H1 (cell line): ENCODE measurements at regions of chr17 and their contacts with region 1.

Region 1: GRCh38 chr17:57902800-57903759 is 52.1 kb downstream of the CUEDC1 start:
- DNase-seq: no peak
- H3K4me3 ChIP-seq: no peak overlapping the region
- H3K27ac ChIP-seq: no peak overlapping the region
- H3K4me1 ChIP-seq: peaks cover 5 to 36% (median 26%) of the 10 kb centered on the region in 4 experiments
- H3K27me3 ChIP-seq: no peaks in the 10 kb centered on the region
- CTCF ChIP-seq: no peak
- EP300 ChIP-seq: no peak
- POLR2A ChIP-seq: no peak
- RAD21 ChIP-seq: no peak

Region 2: DNA sequence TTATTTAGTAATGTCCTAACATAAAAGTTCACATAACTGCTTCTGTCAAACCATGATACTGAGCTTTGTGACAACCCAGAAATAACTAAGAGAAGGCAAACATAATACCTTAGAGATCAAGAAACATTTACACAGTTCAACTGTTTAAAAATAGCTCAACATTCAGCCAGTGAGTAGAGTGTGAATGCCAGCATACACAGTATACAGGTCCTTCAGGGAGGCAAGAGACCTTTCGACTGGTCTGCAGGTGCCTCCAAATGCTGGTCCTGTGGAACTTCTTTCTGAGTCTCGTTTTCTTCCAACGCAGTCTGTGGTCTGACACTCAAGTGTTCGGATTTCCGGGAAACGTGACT is 63.5 kb before region 1 on chr17:
- CTCF ChIA-PET with region 1: no interaction called
- POLR2A ChIA-PET with region 1: no interaction called
- DNase-seq: no peak
- H3K4me3 ChIP-seq: no peak overlapping the region
- H3K27ac ChIP-seq: no peak overlapping the region
- H3K4me1 ChIP-seq: no peaks in the 10 kb centered on the region
- H3K27me3 ChIP-seq: no peaks in the 10 kb centered on the region
- CTCF ChIP-seq: no peak
- EP300 ChIP-seq: no peak
- POLR2A ChIP-seq: no peak
- RAD21 ChIP-seq: no peak

Region 3: DNA sequence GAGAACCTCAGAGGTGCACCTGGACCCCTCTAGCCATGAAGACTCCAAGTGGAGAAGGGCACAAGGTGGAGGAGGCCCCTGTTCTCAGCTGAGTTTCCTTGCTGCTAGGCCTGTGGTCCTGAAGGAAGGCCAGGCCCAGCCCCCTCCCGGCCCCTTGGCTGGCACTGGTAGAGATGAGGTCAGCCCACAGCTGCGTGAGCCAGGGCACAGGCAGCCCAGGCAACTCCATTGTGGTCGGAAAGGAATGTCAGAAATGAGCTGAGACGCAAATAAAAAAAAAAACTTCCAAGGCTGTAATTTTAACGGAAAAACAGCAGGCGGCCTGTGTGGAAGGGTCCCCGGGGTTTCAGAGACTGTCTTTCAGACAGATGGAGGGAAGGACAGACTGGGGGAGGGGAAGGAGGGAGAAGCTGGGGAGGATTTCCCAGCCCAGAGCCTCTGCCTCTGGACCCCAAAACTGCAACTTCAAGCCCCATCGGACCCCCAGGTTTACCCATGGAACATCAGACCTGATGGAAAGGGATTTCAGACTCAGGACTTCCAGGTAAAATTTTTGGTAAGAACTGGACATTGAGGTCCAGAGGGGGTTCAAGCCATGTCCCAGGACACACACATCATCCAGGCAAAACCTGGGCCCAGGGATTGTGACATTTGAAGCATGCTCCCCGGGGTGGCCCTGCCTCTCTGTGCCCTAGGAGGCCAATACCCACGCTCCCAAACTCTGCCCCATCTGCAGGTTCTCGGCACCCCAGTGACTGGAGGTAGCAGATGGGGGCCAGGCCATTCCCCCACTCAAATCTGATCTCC is 27.6 kb before region 1 on chr17:
- CTCF ChIA-PET with region 1: interaction called, 13 read pairs
- POLR2A ChIA-PET with region 1: interaction called, 8 read pairs
- DNase-seq: peak; percentile 71 to 72
- H3K4me3 ChIP-seq: peak overlapping the region in 2 of 4 experiments; percentile 11 to 32; a peak in 5 of 8 replicates
- H3K27ac ChIP-seq: peak overlapping the region; percentile 32; the same call in 1 of the 2 replicates
- H3K4me1 ChIP-seq: peaks cover 21 to 50% (median 37%) of the 10 kb centered on the region in 4 experiments
- H3K27me3 ChIP-seq: peaks cover 0 to 14% (median 6%) of the 10 kb centered on the region in 4 experiments; a peak in 4 of 7 replicates
- CTCF ChIP-seq: 0 out of 4 replicates have a peak, but pooled peaks of 1 of the 3 experiments have one; percentile 6
- EP300 ChIP-seq: no peak
- POLR2A ChIP-seq: no peak
- RAD21 ChIP-seq: peak in 1 of 2 experiments; percentile 20; a peak in 2 of 4 replicates

Region 4: DNA sequence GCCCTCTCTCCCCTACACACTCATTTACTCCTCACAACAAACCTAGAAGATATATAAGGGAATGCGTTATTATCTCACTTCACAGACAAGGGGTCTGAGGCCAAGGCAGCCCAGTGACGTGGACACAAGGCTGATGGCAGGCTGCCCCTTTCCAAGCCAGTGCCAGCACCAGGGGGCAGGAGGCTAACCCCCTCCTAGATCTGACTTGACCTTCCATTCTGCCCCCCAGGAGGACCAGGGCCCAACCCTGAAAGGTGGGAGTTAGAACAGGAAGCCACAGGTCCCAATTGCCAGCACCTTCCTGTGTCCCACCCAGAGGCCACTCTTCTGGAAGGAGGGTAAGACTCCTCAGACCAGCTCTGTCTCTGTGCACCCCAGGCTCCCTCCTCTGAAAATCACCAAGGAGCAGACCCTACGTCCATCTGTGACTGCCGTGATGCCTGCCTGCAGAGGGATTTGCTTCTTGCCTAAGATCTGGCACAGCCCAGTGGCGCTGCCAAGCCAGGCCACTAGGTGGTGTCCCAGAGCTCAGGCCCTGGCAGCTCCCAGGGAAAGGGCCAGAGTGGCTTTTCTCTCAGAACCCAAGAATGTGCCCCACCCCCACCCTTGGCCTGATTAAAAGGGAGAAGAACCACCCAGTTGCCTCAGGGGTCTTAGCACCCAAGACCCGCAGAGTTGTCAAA is 10.8 kb before region 1 on chr17:
- CTCF ChIA-PET with region 1: interaction called, 31 read pairs
- POLR2A ChIA-PET with region 1: interaction called, 9 read pairs
- DNase-seq: peak in 1 of 2 experiments; percentile 99
- H3K4me3 ChIP-seq: peak overlapping the region in 1 of 4 experiments; percentile 1; a peak in 1 of 8 replicates
- H3K27ac ChIP-seq: peak overlapping the region; percentile 54; the same call in 1 of the 2 replicates
- H3K4me1 ChIP-seq: peaks cover 8 to 11% (median 11%) of the 10 kb centered on the region in 4 experiments
- H3K27me3 ChIP-seq: no peaks in the 10 kb centered on the region
- CTCF ChIP-seq: peak; percentile 96 to 100 (median 100)
- EP300 ChIP-seq: peak in 1 of 2 experiments; percentile 71; a peak in 1 of 3 replicates
- POLR2A ChIP-seq: no peak
- RAD21 ChIP-seq: peak; percentile 89 to 94

Region 5: GRCh38 chr17:57946798-57947358 is 43.8 kb after region 1 on chr17:
- CTCF ChIA-PET with region 1: interaction called, 25 read pairs
- POLR2A ChIA-PET with region 1: interaction called, 3 read pairs
- DNase-seq: no peak
- H3K4me3 ChIP-seq: no peak overlapping the region
- H3K27ac ChIP-seq: 0 out of 2 replicates have a peak overlapping the region, but pooled peaks have one; percentile 3
- H3K4me1 ChIP-seq: peaks cover 3 to 13% (median 7%) of the 10 kb centered on the region in 4 experiments
- H3K27me3 ChIP-seq: no peaks in the 10 kb centered on the region
- CTCF ChIP-seq: no peak
- EP300 ChIP-seq: no peak
- POLR2A ChIP-seq: no peak
- RAD21 ChIP-seq: no peak

Region 6: DNA sequence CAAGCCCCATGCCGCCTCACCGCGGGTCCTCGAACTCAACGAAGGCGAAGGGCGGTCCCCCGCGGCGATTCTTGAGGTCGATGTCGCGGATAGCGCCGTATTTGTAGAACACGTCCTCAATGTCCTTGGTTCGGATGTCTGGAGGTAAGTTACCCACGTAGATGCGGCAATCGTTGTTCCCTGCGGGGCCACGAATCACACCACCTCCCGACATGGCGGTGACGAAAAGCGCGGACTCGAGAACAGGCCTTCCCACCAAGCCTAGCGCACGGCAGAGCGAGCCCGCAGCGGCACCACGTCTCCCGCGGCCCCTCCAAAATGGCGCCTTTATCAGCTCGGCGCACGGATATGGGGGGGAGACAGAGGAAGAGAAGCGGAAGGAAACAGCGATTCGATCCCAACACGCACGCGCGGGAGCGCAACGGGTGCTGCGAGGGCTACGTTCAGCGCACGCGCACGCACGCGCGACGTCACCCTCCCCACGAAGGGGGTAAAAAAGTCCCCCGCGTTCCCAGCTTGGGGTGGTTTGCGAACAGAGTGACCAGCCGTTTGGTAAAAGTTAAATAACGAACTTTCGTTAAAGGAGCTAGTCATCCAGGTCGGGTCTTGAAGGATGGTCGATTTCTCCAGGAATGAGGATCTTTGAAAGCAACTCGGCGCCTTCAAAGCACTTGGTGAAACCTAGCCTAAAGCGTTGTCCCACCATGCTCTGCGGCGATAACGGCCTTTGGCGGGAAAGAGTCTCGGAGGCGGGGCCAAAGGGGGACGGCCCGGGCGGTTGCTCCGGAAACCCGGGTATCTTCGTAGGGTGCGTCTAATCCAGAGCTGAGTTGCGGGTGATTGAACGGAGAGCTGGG is 104.1 kb after region 1 on chr17 and contains the start of gene SRSF1:
- CTCF ChIA-PET with region 1: interaction called, 3 read pairs
- POLR2A ChIA-PET with region 1: interaction called, 10 read pairs
- DNase-seq: peak; percentile 87 to 95
- H3K4me3 ChIP-seq: peak within 1 kb of the TSS; percentile 87 to 98 (median 94)
- H3K27ac ChIP-seq: peak within 1 kb of the TSS; percentile 100
- H3K4me1 ChIP-seq: peaks cover 0 to 11% (median 5%) of the 10 kb centered on the region in 4 experiments; a peak in 4 of 7 replicates
- H3K27me3 ChIP-seq: no peaks in the 10 kb centered on the region
- CTCF ChIP-seq: no peak
- EP300 ChIP-seq: peak; percentile 20 to 38; a peak in 1 of 3 replicates
- POLR2A ChIP-seq: peak; percentile 85 to 92
- RAD21 ChIP-seq: no peak; a peak in 1 of 4 replicates
- total RNA-seq, gene SRSF1: 429 and 433 TPM in 2 replicates